Colonic mucosa (tissue), 4 donors: ENCODE measurements at regions of chr5 and their contacts with region 1.

Region 1: GRCh38 chr5:59390074-59390659 is 503.4 kb downstream of the PDE4D start:
- DNase-seq: peak; percentile 32
- H3K4me3 ChIP-seq: no peak overlapping the region
- H3K27ac ChIP-seq: no peak overlapping the region
- H3K4me1 ChIP-seq: no peaks in the 10 kb centered on the region
- H3K27me3 ChIP-seq: no peaks in the 10 kb centered on the region
- CTCF ChIP-seq: peak; percentile 62

Region 2: DNA sequence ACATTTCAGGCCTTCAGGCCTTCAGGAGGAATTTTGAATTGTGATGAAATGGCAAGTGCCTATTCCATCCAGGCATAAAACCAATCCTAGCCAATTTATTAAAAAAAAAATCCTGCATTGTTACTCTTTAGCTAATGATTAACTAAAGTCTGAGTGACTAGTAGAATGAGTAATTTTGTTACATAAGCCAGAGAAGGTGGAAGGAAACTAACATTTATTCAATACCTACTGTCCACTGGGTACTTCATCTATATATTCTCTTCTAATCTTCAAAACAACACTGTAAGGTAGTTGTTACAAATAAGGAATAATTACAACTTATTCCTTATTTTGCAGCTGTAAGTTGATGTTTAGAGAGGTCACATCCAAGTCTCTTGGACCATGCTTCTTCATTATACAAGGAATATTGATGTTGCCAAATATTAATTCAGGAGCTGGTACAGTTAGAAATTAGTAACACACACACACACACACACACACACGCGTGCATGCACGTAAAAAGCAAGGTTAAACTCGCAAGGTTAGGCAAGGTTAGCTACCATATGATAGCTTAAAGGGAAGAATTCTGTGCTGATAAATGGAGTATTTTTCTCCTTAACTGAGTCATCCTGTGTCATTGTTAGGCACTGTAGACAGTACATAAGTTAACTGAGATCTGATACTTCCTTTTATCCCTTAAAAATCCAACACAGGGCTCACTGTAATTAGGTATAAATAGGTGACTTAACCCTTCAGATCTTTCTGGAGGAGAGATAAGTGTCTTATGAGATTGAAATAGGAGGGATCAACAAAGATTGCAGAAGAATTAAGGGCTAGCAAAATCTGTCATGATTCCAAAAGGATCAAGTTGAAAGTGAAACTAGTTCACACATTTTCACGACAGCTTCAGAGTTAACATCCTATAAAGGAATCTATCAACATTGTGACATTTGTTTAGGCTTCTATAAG is 93.6 kb before region 1 on chr5:
- intact Hi-C with region 1: no loop called
- DNase-seq: no peak
- H3K4me3 ChIP-seq: no peak overlapping the region
- H3K27ac ChIP-seq: peak overlapping the region; percentile 70
- H3K4me1 ChIP-seq: no peaks in the 10 kb centered on the region
- H3K27me3 ChIP-seq: no peaks in the 10 kb centered on the region
- CTCF ChIP-seq: no peak

Region 3: GRCh38 chr5:59506285-59506877 is 116.2 kb after region 1 on chr5:
- intact Hi-C with region 1: loop called (anchors 5 kb)
- DNase-seq: no peak
- H3K4me3 ChIP-seq: no peak overlapping the region
- H3K27ac ChIP-seq: no peak overlapping the region
- H3K4me1 ChIP-seq: no peaks in the 10 kb centered on the region
- H3K27me3 ChIP-seq: no peaks in the 10 kb centered on the region
- CTCF ChIP-seq: peak; percentile 43

Region 4: DNA sequence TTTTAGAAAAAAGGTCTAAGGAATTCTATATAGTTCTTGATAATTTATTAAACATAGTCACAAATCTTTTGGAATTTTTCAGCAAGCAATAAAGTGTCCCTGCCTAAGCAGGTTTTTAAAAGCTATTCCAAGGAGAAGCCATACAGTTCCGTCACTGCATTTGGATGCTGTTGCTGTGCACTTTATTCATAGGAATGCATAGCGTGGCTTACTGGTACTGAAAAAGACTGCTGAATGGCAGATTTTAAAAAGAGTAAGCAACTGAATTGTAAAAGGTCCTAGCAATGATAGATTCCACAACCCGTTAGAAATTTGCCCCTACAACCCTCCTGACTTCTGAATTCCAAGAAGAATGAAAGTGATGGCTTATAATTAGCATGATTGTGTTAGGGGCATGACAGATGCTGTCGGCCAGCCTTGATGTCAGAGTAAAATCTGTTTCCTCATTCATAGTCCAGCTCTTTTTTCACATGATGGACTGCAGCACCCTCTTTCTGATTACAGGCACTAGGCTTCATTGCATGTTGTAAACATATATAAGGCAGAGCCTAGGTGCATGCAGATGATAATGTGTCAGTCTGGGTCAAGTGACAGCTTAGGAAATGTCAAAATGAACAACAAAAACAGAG is 276.4 kb after region 1 on chr5:
- intact Hi-C with region 1: loop called (anchors 5 kb)
- DNase-seq: no peak
- H3K4me3 ChIP-seq: no peak overlapping the region
- H3K27ac ChIP-seq: no peak overlapping the region
- H3K4me1 ChIP-seq: no peaks in the 10 kb centered on the region
- H3K27me3 ChIP-seq: no peaks in the 10 kb centered on the region
- CTCF ChIP-seq: peak; percentile 17

Region 5: GRCh38 chr5:59673438-59674058 is 283.4 kb after region 1 on chr5:
- intact Hi-C with region 1: loop called (anchors 5 kb)
- DNase-seq: no peak
- H3K4me3 ChIP-seq: no peak overlapping the region
- H3K27ac ChIP-seq: no peak overlapping the region
- H3K4me1 ChIP-seq: no peaks in the 10 kb centered on the region
- H3K27me3 ChIP-seq: no peaks in the 10 kb centered on the region
- CTCF ChIP-seq: peak; percentile 79

Region 6: DNA sequence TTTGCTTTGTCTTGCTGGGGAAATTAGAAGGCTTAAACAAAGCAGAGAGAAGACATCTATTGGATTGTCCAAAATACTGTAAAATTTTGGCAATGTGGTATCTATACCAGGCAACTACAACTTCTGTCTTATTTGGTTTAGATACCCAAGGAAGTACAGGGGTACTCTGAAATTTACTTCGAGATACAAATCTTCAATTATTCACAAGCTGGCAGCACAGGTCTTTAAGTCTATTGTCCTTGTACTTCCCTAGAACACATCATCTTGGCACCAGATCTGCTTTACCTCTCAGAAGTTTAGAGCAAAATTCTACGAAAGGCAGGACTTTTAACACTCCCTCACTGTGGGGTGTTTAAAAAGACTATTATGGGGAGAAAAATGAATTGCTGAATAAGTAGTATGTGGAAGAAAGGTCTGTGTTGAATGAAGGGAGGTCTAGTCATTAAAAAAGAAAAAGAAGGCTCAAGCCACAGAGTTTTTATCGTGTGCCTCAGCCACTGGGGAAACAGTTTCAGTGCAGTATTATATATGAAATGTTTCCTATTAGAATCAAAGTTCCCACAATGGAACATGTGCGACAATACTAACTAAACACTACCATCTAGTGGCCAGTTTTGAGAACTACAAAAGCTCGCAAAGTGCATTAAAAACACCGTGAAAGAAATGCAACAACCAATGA is 409.6 kb after region 1 on chr5:
- intact Hi-C with region 1: loop called (anchors 5 kb)
- DNase-seq: peak; percentile 38
- H3K4me3 ChIP-seq: no peak overlapping the region
- H3K27ac ChIP-seq: peak overlapping the region; percentile 31
- H3K4me1 ChIP-seq: no peaks in the 10 kb centered on the region
- H3K27me3 ChIP-seq: no peaks in the 10 kb centered on the region
- CTCF ChIP-seq: peak; percentile 84